ENCODE measurements at regions of chr12 and their contacts with region 1.

Region 1: DNA sequence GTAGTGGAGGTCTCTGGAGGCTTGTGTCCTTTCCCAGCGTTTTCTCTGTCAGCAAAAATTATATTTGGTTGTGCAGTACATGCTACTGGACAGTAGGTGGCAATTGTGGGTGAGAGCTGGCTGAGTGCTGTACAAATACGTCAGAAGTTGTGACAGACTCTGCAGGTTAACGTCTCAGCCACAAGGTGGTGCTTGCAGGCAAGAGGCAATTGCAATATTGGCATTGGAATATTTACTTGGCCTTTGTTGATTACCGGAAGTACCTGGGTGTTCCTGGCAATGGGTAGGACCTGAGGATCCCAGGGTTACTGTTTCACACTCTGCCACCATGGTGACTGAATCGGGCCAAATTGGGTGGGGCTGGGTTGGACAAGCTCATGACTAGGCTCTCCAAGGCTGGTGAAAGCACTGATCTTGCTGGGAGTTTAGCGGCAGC is 333.9 kb upstream of the LMO3 start:
- DNase-seq: peak; percentile 61 to 68
- H3K4me3 ChIP-seq: no peak overlapping the region
- H3K27ac ChIP-seq: no peak overlapping the region
- H3K4me1 ChIP-seq: no peaks in the 10 kb centered on the region
- H3K27me3 ChIP-seq: no peaks in the 10 kb centered on the region
- CTCF ChIP-seq: peak; percentile 77 to 100 (median 99)
- EP300 ChIP-seq: no peak
- POLR2A ChIP-seq: no peak
- RAD21 ChIP-seq: peak; percentile 95 to 98

Region 2: DNA sequence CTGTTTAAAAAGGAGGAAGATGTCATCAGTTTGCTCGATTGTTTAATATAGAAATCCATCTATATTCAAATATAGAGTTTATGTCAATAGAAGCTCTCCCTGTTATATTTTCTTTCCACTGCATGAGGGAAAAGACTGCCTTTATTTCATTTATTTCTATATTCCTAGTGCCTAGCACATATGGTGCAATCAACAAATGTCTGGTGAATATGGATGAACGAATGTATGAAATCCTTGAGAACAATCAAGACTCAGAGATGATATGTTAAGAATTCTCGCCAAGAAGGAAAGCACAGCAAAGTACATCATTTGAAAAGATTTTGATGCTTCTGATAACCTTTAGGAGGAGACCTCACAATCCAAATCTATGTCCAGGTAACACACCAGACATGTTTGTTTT is 37.9 kb before region 1 on chr12:
- CTCF ChIA-PET with region 1: interaction called, 10 read pairs
- POLR2A ChIA-PET with region 1: no interaction called
- DNase-seq: no peak
- H3K4me3 ChIP-seq: no peak overlapping the region
- H3K27ac ChIP-seq: no peak overlapping the region
- H3K4me1 ChIP-seq: no peaks in the 10 kb centered on the region
- H3K27me3 ChIP-seq: no peaks in the 10 kb centered on the region
- CTCF ChIP-seq: no peak
- EP300 ChIP-seq: no peak
- POLR2A ChIP-seq: no peak
- RAD21 ChIP-seq: no peak

Region 3: GRCh38 chr12:16913832-16914490 is 25.9 kb before region 1 on chr12:
- CTCF ChIA-PET with region 1: interaction called, 10 read pairs
- POLR2A ChIA-PET with region 1: no interaction called
- DNase-seq: no peak
- H3K4me3 ChIP-seq: no peak overlapping the region
- H3K27ac ChIP-seq: no peak overlapping the region
- H3K4me1 ChIP-seq: no peaks in the 10 kb centered on the region
- H3K27me3 ChIP-seq: no peaks in the 10 kb centered on the region
- CTCF ChIP-seq: no peak
- EP300 ChIP-seq: no peak
- POLR2A ChIP-seq: no peak
- RAD21 ChIP-seq: no peak

Region 4: GRCh38 chr12:16927259-16927658 is 12.6 kb before region 1 on chr12:
- CTCF ChIA-PET with region 1: interaction called, 28 read pairs
- POLR2A ChIA-PET with region 1: no interaction called
- DNase-seq: no peak
- H3K4me3 ChIP-seq: no peak overlapping the region
- H3K27ac ChIP-seq: no peak overlapping the region
- H3K4me1 ChIP-seq: no peaks in the 10 kb centered on the region
- H3K27me3 ChIP-seq: no peaks in the 10 kb centered on the region
- CTCF ChIP-seq: no peak
- EP300 ChIP-seq: no peak
- POLR2A ChIP-seq: no peak
- RAD21 ChIP-seq: no peak

Region 5: DNA sequence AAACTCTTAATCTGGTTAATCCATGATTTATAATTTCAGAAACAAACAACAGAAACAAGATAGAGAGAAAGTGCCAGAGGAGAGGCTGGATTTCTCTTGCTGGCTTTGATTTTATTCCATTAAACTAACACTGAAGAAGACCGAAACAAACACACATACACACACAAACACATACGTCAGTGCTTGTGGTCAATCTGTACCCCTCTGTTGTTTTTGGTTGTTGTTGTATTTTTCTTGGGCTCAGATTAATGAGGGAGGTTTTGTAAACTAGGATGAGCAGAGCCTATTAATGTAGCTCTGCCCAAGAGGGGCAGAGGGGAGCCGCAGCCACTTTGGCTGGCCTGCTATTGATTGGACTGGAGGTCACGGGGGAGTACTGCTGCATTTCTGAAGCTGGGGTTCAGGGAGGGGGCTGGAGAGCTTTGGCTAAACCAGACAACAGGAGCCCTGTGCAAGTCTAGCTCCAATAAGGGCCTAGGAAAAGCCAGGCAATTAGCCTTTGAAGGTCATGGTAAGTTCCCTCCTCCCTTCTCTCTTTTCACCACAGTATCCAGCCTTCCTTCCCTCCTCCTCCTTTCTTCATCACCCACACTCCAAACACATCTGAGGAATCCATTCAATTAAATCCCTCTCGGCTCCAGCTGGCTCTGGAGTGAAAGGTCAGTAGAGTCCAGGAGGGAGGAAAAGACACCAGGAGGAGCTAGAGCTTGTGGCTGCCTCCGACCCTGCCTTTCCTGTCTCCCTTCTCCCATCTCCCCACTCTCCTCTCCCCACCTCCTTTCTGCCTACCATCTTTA is 10.2 kb after region 1 on chr12:
- CTCF ChIA-PET with region 1: interaction called, 35 read pairs
- POLR2A ChIA-PET with region 1: no interaction called
- DNase-seq: no peak
- H3K4me3 ChIP-seq: no peak overlapping the region
- H3K27ac ChIP-seq: no peak overlapping the region
- H3K4me1 ChIP-seq: peaks cover 0 to 4% (median 0%) of the 10 kb centered on the region in 4 experiments; a peak in 2 of 7 replicates
- H3K27me3 ChIP-seq: no peaks in the 10 kb centered on the region
- CTCF ChIP-seq: peak in 2 of 3 experiments; percentile 16 to 17; a peak in 2 of 4 replicates
- EP300 ChIP-seq: no peak
- POLR2A ChIP-seq: no peak
- RAD21 ChIP-seq: peak; percentile 43 to 44

Region 6: GRCh38 chr12:16955083-16955657 is 15.3 kb after region 1 on chr12:
- CTCF ChIA-PET with region 1: interaction called, 35 read pairs
- POLR2A ChIA-PET with region 1: no interaction called
- DNase-seq: no peak
- H3K4me3 ChIP-seq: no peak overlapping the region
- H3K27ac ChIP-seq: no peak overlapping the region
- H3K4me1 ChIP-seq: 0 out of 7 replicates have a peak, but pooled peaks cover 0 to under 1% (median 0%) of the 10 kb centered on the region in 4 experiments
- H3K27me3 ChIP-seq: no peaks in the 10 kb centered on the region
- CTCF ChIP-seq: no peak
- EP300 ChIP-seq: no peak
- POLR2A ChIP-seq: no peak
- RAD21 ChIP-seq: no peak

Region 7: DNA sequence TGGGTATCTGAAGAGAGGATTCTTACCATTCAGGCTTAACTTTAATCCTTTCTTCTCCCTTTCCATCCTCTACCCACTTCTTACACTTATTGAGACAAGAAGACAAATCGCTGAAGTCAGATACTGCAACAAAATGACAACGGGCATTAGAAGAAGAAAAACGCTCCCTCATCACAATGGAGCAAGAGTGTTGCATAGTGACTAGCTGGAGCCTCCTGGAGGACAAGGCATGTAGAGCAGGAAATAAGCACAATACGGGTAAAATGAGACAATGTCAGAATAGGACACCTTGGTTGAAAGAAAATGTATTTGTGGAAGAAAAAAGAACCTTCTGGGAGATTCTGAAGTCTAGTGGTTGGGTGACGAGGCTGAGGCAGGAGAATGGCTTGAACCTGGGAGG is 649.1 kb after region 1 on chr12:
- CTCF ChIA-PET with region 1: interaction called, 15 read pairs
- POLR2A ChIA-PET with region 1: no interaction called
- DNase-seq: peak in 1 of 2 experiments; percentile 2
- H3K4me3 ChIP-seq: no peak overlapping the region
- H3K27ac ChIP-seq: no peak overlapping the region
- H3K4me1 ChIP-seq: no peaks in the 10 kb centered on the region
- H3K27me3 ChIP-seq: no peaks in the 10 kb centered on the region
- CTCF ChIP-seq: peak in 2 of 3 experiments; percentile 67 to 80; a peak in 3 of 4 replicates
- EP300 ChIP-seq: no peak
- POLR2A ChIP-seq: no peak
- RAD21 ChIP-seq: peak; percentile 83

Measured in H1 (cell line).